ENCODE measurements at regions of chr11 and their contacts with region 1.

Region 1: DNA sequence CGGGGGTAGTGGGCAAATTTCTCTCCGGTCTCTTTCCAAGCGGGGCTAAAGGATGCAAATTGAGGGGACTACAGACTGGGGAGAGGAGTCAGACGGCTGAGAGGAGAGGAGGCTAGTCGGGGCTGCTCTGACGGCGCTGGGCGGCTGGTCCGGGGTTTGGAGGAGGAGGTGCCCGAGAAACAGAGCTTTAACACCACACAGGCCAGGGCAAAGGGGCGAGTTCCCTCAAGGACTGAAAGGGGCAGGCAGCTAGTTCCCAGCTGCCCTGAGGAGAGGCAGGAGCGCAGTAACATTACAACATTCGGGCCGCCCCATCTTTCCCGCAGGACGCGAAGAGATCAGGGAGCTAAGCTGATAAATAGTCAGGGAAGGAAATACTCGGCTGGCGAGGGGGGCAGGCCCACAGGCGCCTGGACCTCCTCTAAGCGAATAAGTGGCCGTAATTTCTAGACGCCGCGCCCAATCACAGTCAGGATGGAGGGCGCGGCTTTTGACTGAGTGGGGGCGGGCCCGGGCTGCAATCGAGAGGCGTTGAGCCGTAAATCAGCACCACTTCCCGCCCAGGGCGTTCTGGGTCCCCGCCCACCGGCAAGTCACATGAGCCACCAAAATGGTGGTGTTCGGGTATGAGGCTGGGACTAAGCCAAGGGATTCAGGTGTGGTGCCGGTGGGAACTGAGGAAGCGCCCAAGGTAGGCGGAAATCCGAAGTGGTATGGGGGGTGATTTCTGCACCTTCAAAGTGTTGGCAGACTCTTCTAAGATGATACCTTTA is at the start of gene TMEM126B:
- DNase-seq: peak; percentile 90
- ATAC-seq: peak; percentile 99
- H3K4me3 ChIP-seq: peak within 1 kb of the TSS; percentile 88 to 98
- H3K27ac ChIP-seq: peak within 1 kb of the TSS; percentile 96
- H3K4me1 ChIP-seq: peaks cover 34% of the 10 kb centered on the region
- H3K27me3 ChIP-seq: no peaks in the 10 kb centered on the region
- CTCF ChIP-seq: no peak
- total RNA-seq, gene TMEM126B: 106 TPM

Region 2: DNA sequence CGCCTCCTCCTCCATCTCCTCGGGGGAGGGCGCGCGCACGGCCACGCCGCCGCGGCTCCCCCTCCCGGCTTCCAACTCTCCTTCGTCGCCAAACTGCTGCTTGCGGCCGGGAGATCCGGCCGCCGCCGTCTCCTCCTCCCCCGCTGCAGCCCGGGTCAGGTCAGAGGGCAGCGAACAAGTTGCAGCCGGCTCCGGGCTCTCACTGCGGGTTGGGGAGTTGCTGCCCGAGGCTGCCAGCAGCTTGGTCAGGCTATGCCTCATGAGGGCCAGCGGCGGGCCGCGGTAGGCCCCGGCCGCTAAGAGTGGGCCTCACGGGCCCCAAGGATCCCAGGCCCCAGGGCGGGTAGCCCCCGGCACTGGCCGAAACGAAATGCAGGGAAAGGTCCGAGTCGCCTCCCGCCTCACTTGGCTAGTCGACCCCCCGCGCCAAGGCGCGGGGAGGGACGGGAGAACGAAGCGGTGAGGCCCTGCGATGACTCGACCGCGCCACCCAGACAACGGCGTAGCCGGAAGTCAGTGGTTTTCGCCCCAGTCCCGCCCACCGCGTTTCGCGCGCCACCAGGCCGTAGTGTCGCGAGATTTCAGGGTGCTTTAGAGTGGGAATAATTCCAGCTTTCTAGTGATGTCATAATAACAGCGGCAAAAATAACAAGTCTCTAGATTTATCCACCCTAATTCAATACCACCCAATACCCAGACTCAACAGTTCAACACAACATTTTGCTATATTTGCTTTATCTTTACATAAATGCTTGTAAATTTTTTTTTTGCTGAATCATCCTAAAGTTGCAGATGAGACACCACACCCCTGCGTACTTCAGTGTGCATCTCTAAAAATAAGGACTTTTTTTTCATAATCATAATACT is 36.7 kb after region 1 on chr11 and contains the start of gene CREBZF:
- CTCF ChIA-PET with region 1: interaction called, 3 read pairs
- POLR2A ChIA-PET with region 1: interaction called, 11 read pairs
- in situ Hi-C with region 1: no loop called
- intact Hi-C with region 1: loop called (anchors 5 kb)
- DNase-seq: peak; percentile 89
- ATAC-seq: peak; percentile 96
- H3K4me3 ChIP-seq: peak within 1 kb of the TSS; percentile 68 to 98
- H3K27ac ChIP-seq: peak within 1 kb of the TSS; percentile 90
- H3K4me1 ChIP-seq: peaks cover 33% of the 10 kb centered on the region
- H3K27me3 ChIP-seq: no peaks in the 10 kb centered on the region
- CTCF ChIP-seq: no peak
- total RNA-seq, gene CREBZF: 75.8 TPM

Region 3: GRCh38 chr11:85679576-85679975 is 51.4 kb after region 1 on chr11:
- CTCF ChIA-PET with region 1: no interaction called
- POLR2A ChIA-PET with region 1: no interaction called
- in situ Hi-C with region 1: no loop called
- intact Hi-C with region 1: loop called (anchors 5 kb)
- DNase-seq: no peak
- ATAC-seq: no peak
- H3K4me3 ChIP-seq: no peak overlapping the region
- H3K27ac ChIP-seq: no peak overlapping the region
- H3K4me1 ChIP-seq: peaks cover 16% of the 10 kb centered on the region
- H3K27me3 ChIP-seq: no peaks in the 10 kb centered on the region
- CTCF ChIP-seq: no peak